Activated CD4-positive, alpha-beta memory T cell treated with anti-CD3 and anti-CD28 coated beads for 36 hours (primary cell): ENCODE measurements at regions of chr3 and their contacts with region 1.

Region 1: GRCh38 chr3:17151598-17152373 is 267.0 kb downstream of the PLCL2 start:
- DNase-seq: peak; percentile 95
- H3K4me3 Mint-ChIP-seq: peak overlapping the region; percentile 60
- H3K27ac Mint-ChIP-seq: peak overlapping the region; percentile 88
- H3K4me1 Mint-ChIP-seq: peaks cover 31% of the 10 kb centered on the region
- H3K27me3 Mint-ChIP-seq: no peaks in the 10 kb centered on the region

Region 2: GRCh38 chr3:16309558-16309957 is 842.2 kb before region 1 on chr3:
- CTCF ChIA-PET with region 1: no interaction called
- POLR2A ChIA-PET with region 1: no interaction called
- intact Hi-C with region 1: loop called (anchors 10 kb)
- DNase-seq: peak; percentile 76
- H3K4me3 Mint-ChIP-seq: peak overlapping the region; percentile 33
- H3K27ac Mint-ChIP-seq: peak overlapping the region; percentile 84
- H3K4me1 Mint-ChIP-seq: peaks cover 91% of the 10 kb centered on the region
- H3K27me3 Mint-ChIP-seq: no peaks in the 10 kb centered on the region

Region 3: GRCh38 chr3:16828815-16829214 is 323.0 kb before region 1 on chr3:
- CTCF ChIA-PET with region 1: no interaction called
- POLR2A ChIA-PET with region 1: no interaction called
- intact Hi-C with region 1: loop called (anchors 5 kb)
- DNase-seq: peak; percentile 71
- H3K4me3 Mint-ChIP-seq: no peak overlapping the region
- H3K27ac Mint-ChIP-seq: no peak overlapping the region
- H3K4me1 Mint-ChIP-seq: peaks cover 15% of the 10 kb centered on the region
- H3K27me3 Mint-ChIP-seq: no peaks in the 10 kb centered on the region

Region 4: GRCh38 chr3:16849229-16849628 is 302.6 kb before region 1 on chr3:
- CTCF ChIA-PET with region 1: interaction called, 3 read pairs
- POLR2A ChIA-PET with region 1: no interaction called
- intact Hi-C with region 1: loop called (anchors 1 kb)
- DNase-seq: peak; percentile 78
- H3K4me3 Mint-ChIP-seq: peak overlapping the region; percentile 57
- H3K27ac Mint-ChIP-seq: peak overlapping the region; percentile 16
- H3K4me1 Mint-ChIP-seq: peaks cover 49% of the 10 kb centered on the region
- H3K27me3 Mint-ChIP-seq: no peaks in the 10 kb centered on the region

Region 5: GRCh38 chr3:17023006-17023664 is 128.7 kb before region 1 on chr3:
- CTCF ChIA-PET with region 1: no interaction called
- POLR2A ChIA-PET with region 1: no interaction called
- intact Hi-C with region 1: loop called (anchors 1 kb)
- DNase-seq: peak; percentile 72
- H3K4me3 Mint-ChIP-seq: peak overlapping the region; percentile 52
- H3K27ac Mint-ChIP-seq: peak overlapping the region; percentile 87
- H3K4me1 Mint-ChIP-seq: peaks cover 73% of the 10 kb centered on the region
- H3K27me3 Mint-ChIP-seq: no peaks in the 10 kb centered on the region

Region 6: DNA sequence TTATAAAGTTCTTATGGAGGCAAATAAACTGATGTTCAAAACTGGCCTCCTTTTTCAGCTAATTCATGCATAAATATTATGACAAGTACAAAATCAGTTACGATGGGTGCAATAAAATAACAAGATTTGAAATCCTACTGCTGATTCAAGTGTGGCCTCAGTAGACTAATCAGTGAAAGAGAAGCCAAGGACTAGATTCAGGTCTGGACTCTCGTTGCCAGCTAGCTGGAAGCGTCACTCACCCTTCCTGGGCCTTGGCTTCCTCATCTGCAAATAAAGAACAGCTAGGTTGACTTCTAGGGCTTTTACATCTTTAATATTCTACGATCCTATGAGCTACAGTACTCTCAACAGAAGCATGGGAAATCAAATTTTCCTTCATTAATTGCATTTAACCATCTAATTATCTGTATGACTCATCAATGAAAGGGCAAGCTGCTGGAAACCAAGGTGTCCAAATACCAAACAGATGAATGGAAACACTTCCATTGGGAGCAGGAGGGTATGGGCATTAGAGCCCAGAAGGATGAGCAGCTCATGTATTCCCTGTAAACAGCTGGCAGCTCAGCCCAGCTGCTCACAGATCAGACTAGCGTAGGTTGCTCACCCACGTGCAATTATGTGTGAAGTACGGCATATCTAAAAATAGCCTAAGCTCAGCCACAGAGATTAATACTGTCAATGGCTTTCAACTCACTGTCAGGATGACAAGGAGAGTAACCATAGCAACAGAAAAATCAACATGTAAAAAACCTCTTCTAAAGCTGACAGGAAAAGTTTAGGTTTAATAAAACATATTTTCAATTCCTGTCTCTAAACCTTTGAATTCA is 27.8 kb after region 1 on chr3:
- CTCF ChIA-PET with region 1: no interaction called
- POLR2A ChIA-PET with region 1: interaction called, 4 read pairs
- intact Hi-C with region 1: loop called (anchors 1 kb)
- DNase-seq: no peak
- H3K4me3 Mint-ChIP-seq: no peak overlapping the region
- H3K27ac Mint-ChIP-seq: no peak overlapping the region
- H3K4me1 Mint-ChIP-seq: peaks cover 31% of the 10 kb centered on the region
- H3K27me3 Mint-ChIP-seq: no peaks in the 10 kb centered on the region